Caco-2 (cell line): ENCODE measurements at regions of chr6 and their contacts with region 1.

Region 1: DNA sequence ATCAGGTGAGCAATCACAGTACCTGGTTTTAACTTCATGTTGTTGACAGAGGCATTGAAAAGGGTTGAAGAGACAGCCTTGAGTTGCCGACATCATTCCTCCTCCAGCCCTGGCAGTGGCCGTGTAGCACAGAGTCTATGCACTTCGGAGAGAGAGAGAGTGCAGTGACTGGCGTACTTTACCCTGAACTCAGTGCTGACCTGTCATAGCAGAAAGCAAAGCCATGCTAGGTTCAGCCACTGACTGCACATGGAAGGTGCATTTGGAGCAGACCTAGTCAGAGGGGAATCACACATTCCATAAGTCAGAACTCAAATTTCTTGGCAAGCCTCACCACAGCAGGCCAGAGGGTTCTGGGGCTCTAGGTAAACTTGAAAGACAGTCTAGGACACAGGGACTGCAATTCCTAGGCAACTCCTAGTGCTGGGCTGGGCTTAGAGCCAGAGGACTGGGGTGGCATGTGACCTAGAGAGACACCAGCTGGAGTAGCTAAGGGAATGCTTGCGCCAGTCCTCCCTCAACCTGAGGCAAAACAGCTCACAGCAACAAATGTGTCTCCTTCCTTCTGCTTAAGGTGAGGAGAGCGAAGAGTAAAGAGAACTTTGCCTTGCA is 69.1 kb downstream of the ELOVL4 start:
- DNase-seq: no peak
- H3K4me3 ChIP-seq: no peak overlapping the region
- H3K4me3 Mint-ChIP-seq: no peak overlapping the region
- H3K27ac Mint-ChIP-seq: no peak overlapping the region
- H3K4me1 ChIP-seq: peaks cover 9% of the 10 kb centered on the region; the same call in 1 of the 2 replicates
- H3K4me1 Mint-ChIP-seq: peaks cover 14% of the 10 kb centered on the region
- H3K27me3 ChIP-seq: no peaks in the 10 kb centered on the region
- H3K27me3 Mint-ChIP-seq: no peaks in the 10 kb centered on the region
- CTCF ChIP-seq: no peak

Region 2: GRCh38 chr6:80527552-80528052 is 649.4 kb after region 1 on chr6:
- CTCF ChIA-PET with region 1: no interaction called
- POLR2A ChIA-PET with region 1: no interaction called
- intact Hi-C with region 1: loop called (anchors 5 kb)
- DNase-seq: peak in 1 of 2 experiments; percentile 48
- H3K4me3 ChIP-seq: no peak overlapping the region
- H3K4me3 Mint-ChIP-seq: peak overlapping the region; percentile 4
- H3K27ac Mint-ChIP-seq: peak overlapping the region; percentile 8
- H3K4me1 ChIP-seq: peaks cover 19% of the 10 kb centered on the region
- H3K4me1 Mint-ChIP-seq: no peaks in the 10 kb centered on the region
- H3K27me3 ChIP-seq: no peaks in the 10 kb centered on the region
- H3K27me3 Mint-ChIP-seq: no peaks in the 10 kb centered on the region
- CTCF ChIP-seq: no peak